Right ventricle myocardium inferior (tissue), 1 donor: ENCODE measurements at regions of chr9 and their contacts with region 1.

Region 1: GRCh38 chr9:105447814-105448812 is at the start of gene FSD1L:
- DNase-seq: peak; percentile 97
- ATAC-seq: peak; percentile 99
- total RNA-seq, gene FSD1L: 4.5 TPM

Region 2: DNA sequence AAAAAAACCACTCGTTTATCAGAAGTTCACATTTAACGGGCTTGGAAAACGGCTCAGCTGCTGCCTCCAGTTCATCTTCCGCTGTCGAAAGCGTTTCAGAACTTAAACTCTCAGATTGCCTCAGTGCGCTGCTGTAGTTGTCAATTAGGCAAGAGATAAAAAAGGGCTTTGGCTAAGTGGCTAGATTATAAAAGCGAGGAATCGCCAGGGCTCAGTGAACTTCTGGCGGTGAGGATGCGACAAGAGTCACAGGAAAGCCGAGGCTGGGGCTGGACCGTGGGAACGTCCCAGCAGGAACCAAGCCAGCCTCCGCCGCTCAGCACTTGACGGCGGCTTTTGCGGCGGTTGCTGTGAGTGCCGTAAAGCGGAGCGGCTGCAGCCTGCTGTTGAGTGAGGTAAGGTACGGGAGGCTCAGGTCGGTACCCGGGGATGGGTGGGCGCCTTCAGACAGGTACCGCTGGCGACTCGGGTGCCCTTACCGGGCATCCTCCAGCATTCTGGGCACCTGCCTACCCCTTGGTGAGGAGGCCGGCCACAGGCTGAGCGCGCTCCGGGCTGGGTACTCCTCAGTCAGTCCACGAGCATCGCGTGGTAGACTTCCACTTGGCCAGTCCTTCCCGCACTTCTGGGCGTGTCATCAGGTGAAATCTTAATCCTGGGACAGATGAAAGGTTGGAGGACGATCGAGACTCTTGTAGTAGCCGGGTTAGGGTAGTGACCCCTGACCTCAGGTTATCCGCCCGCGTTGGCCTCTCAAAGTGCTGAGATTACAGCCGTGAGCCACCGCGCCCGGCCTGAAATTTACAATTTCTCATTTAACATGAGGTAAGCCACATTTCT is 109.9 kb after region 1 on chr9 and contains the start of gene FKTN:
- intact Hi-C with region 1: loop called (anchors 5 kb)
- DNase-seq: peak; percentile 95
- ATAC-seq: peak; percentile 96
- total RNA-seq, gene FKTN: 6.5 TPM

Region 3: GRCh38 chr9:105930011-105930627 is 482.0 kb after region 1 on chr9:
- intact Hi-C with region 1: no loop called
- DNase-seq: no peak
- ATAC-seq: peak; percentile 89